OCI-LY7 (cell line): ENCODE measurements at regions of chr12 and their contacts with region 1.

Region 1: DNA sequence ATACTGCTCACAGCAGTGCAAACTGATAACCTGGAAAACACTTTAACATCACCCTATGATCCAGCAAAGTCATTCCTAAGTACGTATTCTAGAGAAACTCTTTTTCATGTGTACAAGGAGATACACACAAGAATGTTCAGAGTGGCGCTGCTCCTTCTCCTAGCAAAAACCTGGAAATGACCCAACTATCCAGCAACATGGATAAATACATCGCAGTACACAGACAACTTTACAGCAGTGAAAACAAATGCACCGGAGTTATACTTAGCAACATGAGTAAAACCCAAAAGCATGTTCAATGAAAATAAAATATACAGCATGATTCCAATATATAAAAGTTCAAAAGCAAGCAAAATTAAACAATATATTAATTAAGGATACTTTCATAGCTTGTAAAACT is 18.7 kb downstream of the SART3 start:
- DNase-seq: no peak
- H3K4me3 ChIP-seq: peak overlapping the region; percentile 55
- H3K27ac ChIP-seq: peak overlapping the region; percentile 95
- H3K4me1 ChIP-seq: peaks cover 43% of the 10 kb centered on the region
- CTCF ChIP-seq: no peak

Region 2: GRCh38 chr12:108029051-108029835 is 513.1 kb before region 1 on chr12:
- CTCF ChIA-PET with region 1: no interaction called
- POLR2A ChIA-PET with region 1: no interaction called
- intact Hi-C with region 1: no loop called
- DNase-seq: no peak
- H3K4me3 ChIP-seq: no peak overlapping the region
- H3K27ac ChIP-seq: no peak overlapping the region
- H3K4me1 ChIP-seq: no peaks in the 10 kb centered on the region
- CTCF ChIP-seq: no peak

Region 3: GRCh38 chr12:108430245-108430644 is 112.1 kb before region 1 on chr12:
- CTCF ChIA-PET with region 1: no interaction called
- POLR2A ChIA-PET with region 1: no interaction called
- intact Hi-C with region 1: no loop called
- DNase-seq: no peak
- H3K4me3 ChIP-seq: no peak overlapping the region
- H3K27ac ChIP-seq: no peak overlapping the region
- H3K4me1 ChIP-seq: no peaks in the 10 kb centered on the region
- CTCF ChIP-seq: no peak

Region 4: GRCh38 chr12:108531929-108532848 is 10.1 kb before region 1 on chr12:
- CTCF ChIA-PET with region 1: no interaction called
- POLR2A ChIA-PET with region 1: interaction called, 13 read pairs
- intact Hi-C with region 1: no loop called
- DNase-seq: no peak
- H3K4me3 ChIP-seq: no peak overlapping the region
- H3K27ac ChIP-seq: no peak overlapping the region
- H3K4me1 ChIP-seq: no peaks in the 10 kb centered on the region
- CTCF ChIP-seq: no peak

Region 5: DNA sequence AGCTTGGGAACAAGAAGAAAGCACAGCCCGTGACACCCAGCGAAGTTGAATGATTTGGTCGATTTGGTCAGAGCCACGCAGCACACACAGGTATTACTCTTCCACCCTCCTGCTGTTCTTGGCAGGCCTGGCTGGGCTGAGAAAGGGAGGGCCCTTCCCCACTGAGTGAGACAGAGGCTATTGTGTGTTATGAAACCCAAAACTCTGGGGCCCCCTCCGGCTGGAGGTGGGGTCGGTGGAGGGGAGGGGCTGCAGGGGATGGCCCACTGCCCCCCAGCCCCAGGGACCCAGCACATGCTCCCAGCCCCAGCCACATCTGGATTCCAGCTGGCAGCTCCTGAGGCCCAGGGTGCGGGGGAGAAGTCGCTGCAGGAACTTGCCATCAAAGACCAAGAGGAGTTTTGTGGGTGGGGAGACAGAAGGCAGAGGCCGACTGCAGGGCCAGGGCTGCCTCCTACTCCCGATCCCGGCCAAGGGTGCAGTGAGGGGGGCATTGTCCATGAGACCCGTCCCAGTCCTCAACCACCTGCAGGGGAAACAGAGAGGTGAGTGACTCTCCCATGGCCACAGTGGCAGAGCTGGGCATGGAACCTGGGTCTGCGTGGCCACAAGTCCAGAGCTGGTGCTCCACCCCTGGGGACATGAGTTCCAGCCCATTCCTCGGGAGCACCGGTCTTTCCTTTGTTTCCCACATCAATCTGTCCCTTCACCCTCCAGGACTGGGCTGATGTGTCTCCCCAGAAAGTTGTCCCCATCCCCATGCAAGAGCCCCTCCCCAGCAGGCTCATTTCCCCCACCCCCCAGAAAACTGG is 46.9 kb after region 1 on chr12:
- CTCF ChIA-PET with region 1: no interaction called
- POLR2A ChIA-PET with region 1: no interaction called
- intact Hi-C with region 1: no loop called
- DNase-seq: no peak
- H3K4me3 ChIP-seq: no peak overlapping the region
- H3K27ac ChIP-seq: no peak overlapping the region
- H3K4me1 ChIP-seq: no peaks in the 10 kb centered on the region
- CTCF ChIP-seq: no peak